Activated CD4-positive, alpha-beta T cell treated with anti-CD3 and anti-CD28 coated beads for 36 hours (primary cell): ENCODE measurements at regions of chr16 and their contacts with region 1.

Region 1: DNA sequence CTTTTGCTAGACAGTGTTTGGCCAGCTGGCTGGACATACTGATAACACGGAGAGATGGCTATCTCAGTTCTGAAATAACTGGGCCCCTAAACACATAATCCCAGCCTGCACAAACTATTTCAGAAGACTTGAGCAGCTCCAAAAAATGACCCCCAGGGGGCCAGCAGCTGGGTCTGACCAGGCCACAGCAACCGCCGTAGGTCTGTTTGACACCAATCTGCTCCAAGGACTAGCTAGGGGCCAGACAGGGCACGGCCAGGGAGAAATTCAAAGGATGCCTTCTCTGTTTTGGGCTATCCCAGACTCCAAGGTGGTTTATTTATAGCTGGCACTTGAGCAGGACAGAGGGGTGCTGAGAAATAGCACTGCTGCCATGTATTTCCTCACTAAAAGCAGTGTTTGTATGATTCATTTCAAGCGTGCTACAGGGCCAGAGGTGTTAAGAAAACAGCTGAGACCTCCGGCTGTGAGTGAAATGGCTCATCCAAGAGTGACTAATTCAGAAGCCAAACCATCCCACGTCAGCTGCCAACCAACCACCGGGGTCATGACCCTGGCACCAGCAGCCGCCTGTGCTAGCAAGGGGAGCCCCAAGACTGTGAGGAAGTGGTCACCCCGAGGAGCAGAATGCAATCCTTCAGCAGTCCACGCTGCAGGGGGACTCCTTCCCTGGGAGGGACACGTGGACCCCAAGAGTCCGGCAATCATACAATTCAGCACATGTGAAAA is 5.7 kb downstream of the GGA2 start:
- DNase-seq: peak; percentile 92
- ATAC-seq: peak; percentile 94
- H3K4me3 Mint-ChIP-seq: peak overlapping the region; percentile 26
- H3K27ac Mint-ChIP-seq: peak overlapping the region; percentile 83
- H3K4me1 Mint-ChIP-seq: peaks cover 77% of the 10 kb centered on the region
- H3K27me3 Mint-ChIP-seq: no peaks in the 10 kb centered on the region

Region 2: DNA sequence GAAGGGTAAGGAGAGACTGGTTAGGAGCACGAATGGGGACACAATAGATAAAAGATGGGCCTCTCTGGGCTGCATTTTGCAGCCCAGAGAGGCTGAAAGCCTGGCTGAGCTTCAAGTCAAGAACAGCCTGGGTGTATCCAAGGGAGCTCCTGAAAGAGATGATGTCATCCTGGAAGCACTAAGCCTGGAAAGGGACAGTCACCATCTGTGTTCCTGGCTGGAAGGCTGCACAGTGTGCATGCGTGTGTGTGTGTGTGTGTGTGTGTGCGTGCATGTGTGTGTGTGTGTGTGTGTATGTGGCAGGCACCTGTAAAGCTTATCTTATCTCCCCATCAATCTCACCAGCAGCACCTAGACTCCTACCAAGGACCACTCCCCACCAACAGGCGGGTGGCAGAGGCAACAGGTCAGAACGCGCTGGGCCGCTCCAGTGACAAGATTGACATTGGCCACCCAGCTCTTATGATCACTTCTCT is 95.8 kb before region 1 on chr16:
- CTCF ChIA-PET with region 1: no interaction called
- POLR2A ChIA-PET with region 1: no interaction called
- intact Hi-C with region 1: no loop called
- DNase-seq: no peak
- ATAC-seq: no peak
- H3K4me3 Mint-ChIP-seq: no peak overlapping the region
- H3K27ac Mint-ChIP-seq: no peak overlapping the region
- H3K4me1 Mint-ChIP-seq: no peaks in the 10 kb centered on the region
- H3K27me3 Mint-ChIP-seq: no peaks in the 10 kb centered on the region

Region 3: DNA sequence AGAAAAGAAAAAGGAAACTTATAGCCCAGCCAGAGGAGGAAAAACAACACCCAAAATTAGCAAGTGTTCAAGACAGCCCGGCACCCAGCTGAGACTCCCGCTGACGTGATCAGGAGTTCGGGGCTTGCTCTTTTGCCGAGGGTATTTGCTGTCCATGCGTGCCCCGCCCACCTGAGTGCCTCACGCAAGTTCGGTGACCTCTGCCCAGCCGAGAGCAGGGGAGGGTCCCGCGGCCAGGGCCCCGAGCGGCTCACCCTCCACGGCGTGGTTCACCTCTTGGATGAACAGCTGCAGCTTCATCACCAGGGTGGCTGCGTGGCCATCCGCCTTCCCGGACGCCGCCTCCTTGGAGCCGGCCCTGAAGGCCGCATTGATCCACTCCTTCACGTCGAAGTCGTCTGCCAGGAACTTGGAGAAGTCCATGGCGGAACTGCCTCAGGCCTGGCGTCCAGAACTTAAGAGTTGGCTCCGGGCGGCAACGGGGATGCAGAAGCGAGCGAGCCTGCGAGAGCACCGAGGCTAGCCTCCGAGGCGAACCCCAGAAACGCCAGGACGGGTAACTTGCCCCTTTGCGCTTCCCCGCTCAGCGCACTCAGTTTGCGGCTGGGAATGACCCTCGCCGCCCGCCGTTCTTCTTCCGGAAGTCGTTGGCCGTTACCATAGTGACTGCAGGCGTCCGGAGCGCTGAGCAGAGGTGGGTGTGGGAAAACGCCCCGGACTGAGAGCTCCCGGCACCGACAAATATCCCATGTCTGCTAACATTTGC is 51.9 kb before region 1 on chr16 and contains the start of gene COG7:
- CTCF ChIA-PET with region 1: no interaction called
- POLR2A ChIA-PET with region 1: no interaction called
- intact Hi-C with region 1: loop called in 1 of 2 experiments (anchors 1 kb)
- DNase-seq: peak; percentile 92
- ATAC-seq: peak; percentile 94
- H3K4me3 Mint-ChIP-seq: peak within 1 kb of the TSS; percentile 92
- H3K27ac Mint-ChIP-seq: peak within 1 kb of the TSS; percentile 93
- H3K4me1 Mint-ChIP-seq: peaks cover 20% of the 10 kb centered on the region
- H3K27me3 Mint-ChIP-seq: no peaks in the 10 kb centered on the region
- total RNA-seq, gene COG7: 18.1 to 19.9 TPM

Region 4: DNA sequence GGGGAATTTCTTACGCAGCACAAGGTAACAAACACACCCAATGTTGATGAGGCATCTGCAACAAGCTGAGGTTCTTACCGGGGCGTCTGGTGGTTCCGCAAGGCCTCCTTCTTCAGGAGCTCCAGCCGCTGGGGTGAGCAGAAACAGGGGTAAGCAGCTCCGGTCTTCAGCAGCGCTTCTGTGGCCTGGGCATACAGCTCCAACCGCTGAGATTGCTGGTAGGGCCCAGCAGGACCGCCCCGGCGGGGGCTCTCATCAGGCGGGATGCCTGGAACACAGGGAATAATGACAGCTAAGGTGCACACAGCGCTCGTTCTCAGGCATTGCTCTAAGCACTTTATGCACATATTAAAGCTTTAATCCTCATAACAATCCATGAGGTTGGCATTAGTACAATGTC is 39.8 kb after region 1 on chr16:
- CTCF ChIA-PET with region 1: no interaction called
- POLR2A ChIA-PET with region 1: no interaction called
- intact Hi-C with region 1: no loop called
- DNase-seq: no peak
- ATAC-seq: no peak
- H3K4me3 Mint-ChIP-seq: no peak overlapping the region
- H3K27ac Mint-ChIP-seq: no peak overlapping the region
- H3K4me1 Mint-ChIP-seq: no peaks in the 10 kb centered on the region
- H3K27me3 Mint-ChIP-seq: no peaks in the 10 kb centered on the region

Region 5: DNA sequence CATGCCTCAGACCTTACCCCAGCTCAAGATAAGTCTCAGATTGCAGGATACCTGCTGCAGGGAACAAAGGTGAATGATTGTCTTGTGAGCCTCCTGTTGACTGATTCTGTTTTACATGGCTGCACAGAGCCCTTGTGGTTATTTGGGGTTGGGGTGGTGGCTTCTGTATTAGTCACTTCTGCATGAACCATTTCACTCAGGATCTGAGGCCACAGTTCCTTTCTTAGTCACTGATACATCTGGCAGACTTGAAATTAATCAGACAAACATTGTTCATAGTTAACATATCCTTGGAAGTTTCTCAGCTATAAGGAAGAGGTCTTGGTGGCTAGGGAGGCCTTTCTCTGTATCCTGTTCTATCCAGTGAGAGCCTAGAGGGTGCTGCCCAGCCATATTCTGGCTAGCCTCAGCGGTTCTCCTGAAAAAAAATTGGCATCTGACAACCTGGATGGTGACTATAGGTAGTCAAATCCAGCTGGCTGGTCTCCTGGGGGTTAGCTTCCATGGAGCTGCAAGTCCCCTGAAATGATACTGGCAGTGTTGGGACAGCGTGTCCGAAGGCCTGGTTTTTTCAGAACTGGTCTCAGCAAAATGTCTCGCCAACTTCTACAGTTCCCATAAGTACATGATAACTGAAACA is 165.6 kb after region 1 on chr16:
- CTCF ChIA-PET with region 1: no interaction called
- POLR2A ChIA-PET with region 1: no interaction called
- intact Hi-C with region 1: loop called in 1 of 2 experiments (anchors 1 kb)
- DNase-seq: peak; percentile 84
- ATAC-seq: peak; percentile 98
- H3K4me3 Mint-ChIP-seq: no peak overlapping the region
- H3K27ac Mint-ChIP-seq: peak overlapping the region; percentile 16
- H3K4me1 Mint-ChIP-seq: peaks cover 20% of the 10 kb centered on the region
- H3K27me3 Mint-ChIP-seq: no peaks in the 10 kb centered on the region

Region 6: GRCh38 chr16:23678430-23679273 is 174.0 kb after region 1 on chr16 and contains the start of gene PLK1:
- CTCF ChIA-PET with region 1: no interaction called
- POLR2A ChIA-PET with region 1: interaction called, 6 read pairs
- intact Hi-C with region 1: loop called in 1 of 2 experiments (anchors 2 kb)
- DNase-seq: peak; percentile 93
- ATAC-seq: peak; percentile 97
- H3K4me3 Mint-ChIP-seq: peak within 1 kb of the TSS; percentile 95
- H3K27ac Mint-ChIP-seq: peak within 1 kb of the TSS; percentile 60
- H3K4me1 Mint-ChIP-seq: peaks cover 16% of the 10 kb centered on the region
- H3K27me3 Mint-ChIP-seq: no peaks in the 10 kb centered on the region
- total RNA-seq, gene PLK1: 91.4 to 120 TPM

Region 7: GRCh38 chr16:23803591-23804123 is 299.0 kb after region 1 on chr16:
- CTCF ChIA-PET with region 1: no interaction called
- POLR2A ChIA-PET with region 1: no interaction called
- intact Hi-C with region 1: no loop called
- DNase-seq: peak; percentile 84
- ATAC-seq: peak; percentile 88
- H3K4me3 Mint-ChIP-seq: peak overlapping the region; percentile 1
- H3K27ac Mint-ChIP-seq: peak overlapping the region; percentile 42
- H3K4me1 Mint-ChIP-seq: peaks cover 12% of the 10 kb centered on the region
- H3K27me3 Mint-ChIP-seq: peaks cover 2% of the 10 kb centered on the region

Region 8: DNA sequence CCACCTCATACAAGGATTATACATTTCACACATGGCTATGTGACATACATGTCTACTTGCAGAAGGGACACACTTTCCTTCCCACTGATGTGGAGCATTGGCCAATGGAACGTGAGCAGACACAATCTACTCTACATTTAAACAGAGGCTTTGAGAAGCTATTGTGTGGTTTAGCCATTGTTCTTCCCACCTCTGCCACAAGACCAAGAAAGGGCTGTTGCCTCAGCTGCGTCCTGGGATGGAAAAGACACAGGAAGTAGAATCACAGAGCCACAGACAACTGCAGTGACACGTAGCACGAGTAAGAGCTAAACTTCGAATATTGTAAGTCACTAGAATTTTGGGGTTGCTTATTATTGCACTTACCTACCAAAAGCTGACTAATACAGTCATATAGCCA is 364.4 kb after region 1 on chr16:
- CTCF ChIA-PET with region 1: no interaction called
- POLR2A ChIA-PET with region 1: no interaction called
- intact Hi-C with region 1: loop called in 1 of 2 experiments (anchors 1 kb)
- DNase-seq: peak; percentile 64
- ATAC-seq: peak; percentile 91
- H3K4me3 Mint-ChIP-seq: no peak overlapping the region
- H3K27ac Mint-ChIP-seq: peak overlapping the region; percentile 73
- H3K4me1 Mint-ChIP-seq: peaks cover 65% of the 10 kb centered on the region
- H3K27me3 Mint-ChIP-seq: no peaks in the 10 kb centered on the region